ENCODE measurements at regions of chr18 and their contacts with region 1.

Region 1: GRCh38 chr18:10519999-10520935 is 5.6 kb upstream of the NAPG start:
- DNase-seq: peak; percentile 80 to 81
- H3K4me3 ChIP-seq: no peak overlapping the region
- H3K4me3 Mint-ChIP-seq: no peak overlapping the region
- H3K27ac Mint-ChIP-seq: no peak overlapping the region
- H3K4me1 ChIP-seq: peaks cover 3% of the 10 kb centered on the region; the same call in 1 of the 2 replicates
- H3K4me1 Mint-ChIP-seq: peaks cover 7% of the 10 kb centered on the region
- H3K27me3 ChIP-seq: peaks cover 1% of the 10 kb centered on the region
- H3K27me3 Mint-ChIP-seq: peaks cover 16% of the 10 kb centered on the region
- CTCF ChIP-seq: peak; percentile 73 to 91

Region 2: DNA sequence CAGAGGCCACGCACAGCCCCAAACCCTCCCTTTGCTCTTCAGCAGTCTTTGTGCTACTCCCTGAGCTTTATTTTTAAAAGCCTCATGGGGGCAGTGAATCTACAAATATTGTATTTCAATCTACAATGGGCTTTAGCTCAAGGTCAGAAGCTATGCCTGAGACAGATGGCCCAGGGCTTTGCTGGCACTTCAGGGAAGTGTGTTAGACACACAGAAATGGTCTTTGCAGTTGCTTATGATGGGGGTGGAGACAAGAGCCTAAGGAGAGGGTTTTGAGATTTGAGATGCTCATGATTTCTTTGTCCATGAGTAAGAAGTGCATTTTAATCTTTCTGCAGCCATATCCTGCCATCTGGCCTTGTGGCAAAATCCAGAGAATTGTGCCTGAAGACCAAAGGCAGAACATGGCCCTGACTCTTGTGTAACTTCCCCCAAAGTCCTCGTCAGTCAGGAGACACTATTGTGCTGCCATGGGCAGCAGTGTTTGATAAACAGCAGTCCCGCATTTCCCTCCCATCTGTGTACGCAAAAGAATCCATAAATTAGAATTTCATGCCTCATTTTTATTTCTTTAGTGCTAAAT is 513.9 kb before region 1 on chr18:
- CTCF ChIA-PET with region 1: interaction called, 7 read pairs
- POLR2A ChIA-PET with region 1: no interaction called
- intact Hi-C with region 1: loop called (anchors 1 kb)
- DNase-seq: peak in 1 of 2 experiments; percentile 24
- H3K4me3 ChIP-seq: no peak overlapping the region
- H3K4me3 Mint-ChIP-seq: no peak overlapping the region
- H3K27ac Mint-ChIP-seq: no peak overlapping the region
- H3K4me1 ChIP-seq: no peaks in the 10 kb centered on the region
- H3K4me1 Mint-ChIP-seq: no peaks in the 10 kb centered on the region
- H3K27me3 ChIP-seq: no peaks in the 10 kb centered on the region
- H3K27me3 Mint-ChIP-seq: no peaks in the 10 kb centered on the region
- CTCF ChIP-seq: peak in 1 of 2 experiments; percentile 35

Region 3: DNA sequence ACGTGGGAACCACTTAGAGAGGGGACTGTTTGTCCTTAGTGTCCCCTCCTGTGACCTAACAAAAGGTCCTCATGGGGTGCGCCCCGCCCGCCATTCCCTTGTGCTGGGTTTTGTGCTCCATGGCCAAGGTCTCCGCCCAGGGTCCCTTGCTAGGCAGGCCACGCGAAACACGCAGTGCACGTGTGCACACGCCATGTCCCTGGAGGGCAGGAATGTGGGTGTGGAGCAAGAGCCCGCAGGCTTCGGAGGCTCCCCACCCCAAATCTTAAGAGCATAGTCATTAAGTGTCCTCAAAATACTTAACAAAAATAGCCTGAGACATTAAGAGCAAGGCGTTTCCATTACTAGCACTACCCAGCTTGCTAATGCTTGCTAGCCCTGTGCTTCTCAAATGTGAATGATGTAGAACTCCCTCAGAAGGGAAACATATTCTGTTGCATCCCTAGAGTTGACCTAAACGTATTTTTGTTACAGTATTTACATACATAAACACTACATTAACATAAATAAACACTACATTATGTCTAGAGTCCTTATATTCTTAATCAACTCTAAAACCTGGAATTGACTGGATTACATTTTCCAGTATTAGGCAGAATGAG is 183.4 kb before region 1 on chr18:
- CTCF ChIA-PET with region 1: no interaction called
- POLR2A ChIA-PET with region 1: no interaction called
- intact Hi-C with region 1: loop called (anchors 10 kb)
- DNase-seq: no peak
- H3K4me3 ChIP-seq: no peak overlapping the region
- H3K4me3 Mint-ChIP-seq: no peak overlapping the region
- H3K27ac Mint-ChIP-seq: no peak overlapping the region
- H3K4me1 ChIP-seq: no peaks in the 10 kb centered on the region
- H3K4me1 Mint-ChIP-seq: no peaks in the 10 kb centered on the region
- H3K27me3 ChIP-seq: no peaks in the 10 kb centered on the region
- H3K27me3 Mint-ChIP-seq: no peaks in the 10 kb centered on the region
- CTCF ChIP-seq: no peak

Measured in Caco-2 (cell line).